ENCODE measurements at regions of chr18 and their contacts with region 1.

Region 1: GRCh38 chr18:63936156-63936931 is 12.8 kb upstream of the HMSD start:
- DNase-seq: peak; percentile 87 to 90 (median 89)
- ATAC-seq: peak; percentile 100
- H3K4me3 ChIP-seq: peak overlapping the region in 1 of 2 donors; percentile 9
- H3K27ac ChIP-seq: peak overlapping the region in 1 of 4 donors; percentile 20
- H3K4me1 ChIP-seq: peaks cover 11% of the 10 kb centered on the region
- H3K27me3 ChIP-seq: no peaks in the 10 kb centered on the region
- CTCF ChIP-seq: peak; percentile 70 to 94 (median 92)
- POLR2A ChIP-seq: no peak

Region 2: GRCh38 chr18:63523660-63524059 is 412.7 kb before region 1 on chr18:
- intact Hi-C with region 1: loop called (anchors 10 kb)
- DNase-seq: no peak
- ATAC-seq: no peak
- H3K4me3 ChIP-seq: no peak overlapping the region
- H3K27ac ChIP-seq: no peak overlapping the region
- H3K4me1 ChIP-seq: peaks cover 2% of the 10 kb centered on the region
- H3K27me3 ChIP-seq: no peaks in the 10 kb centered on the region
- CTCF ChIP-seq: no peak
- POLR2A ChIP-seq: no peak

Region 3: DNA sequence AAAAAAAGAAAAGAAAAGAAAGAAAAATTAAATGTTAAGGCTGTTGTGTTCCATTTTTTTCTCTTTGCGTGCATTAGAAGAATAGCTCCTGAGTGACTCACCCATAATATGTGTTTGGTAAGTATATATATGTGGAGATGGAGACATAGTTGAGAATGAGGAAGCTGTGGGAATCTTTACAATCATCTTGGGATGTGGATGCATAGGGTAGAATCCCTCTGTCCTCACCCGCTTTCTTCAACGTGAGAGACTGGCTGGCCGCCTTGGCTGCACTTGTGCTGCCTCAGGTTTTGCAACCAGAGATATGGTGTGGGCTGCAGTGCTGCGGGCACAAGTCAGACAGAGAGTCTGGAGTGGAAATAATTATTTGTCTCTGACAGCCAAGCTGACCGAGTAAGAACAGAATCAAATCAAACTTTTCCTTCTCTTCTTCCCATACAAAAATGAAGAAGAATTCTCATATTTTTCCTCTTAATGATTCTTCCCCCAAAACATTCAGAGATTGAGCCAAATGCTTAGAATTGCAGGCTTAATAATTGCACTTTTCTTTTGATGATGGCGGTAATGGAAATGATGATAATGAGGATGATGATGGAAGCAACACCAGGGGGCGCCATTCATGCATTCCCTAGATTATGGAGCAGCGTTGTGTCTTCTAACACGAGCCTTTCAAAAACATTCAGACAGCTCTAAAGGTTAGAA is 112.7 kb before region 1 on chr18:
- intact Hi-C with region 1: loop called (anchors 5 kb)
- DNase-seq: peak; percentile 46 to 76 (median 73)
- ATAC-seq: peak; percentile 62
- H3K4me3 ChIP-seq: no peak overlapping the region
- H3K27ac ChIP-seq: no peak overlapping the region
- H3K4me1 ChIP-seq: no peaks in the 10 kb centered on the region
- H3K27me3 ChIP-seq: no peaks in the 10 kb centered on the region
- CTCF ChIP-seq: peak in 6 of 7 experiments; percentile 53 to 65 (median 56)
- POLR2A ChIP-seq: no peak